ENCODE measurements at regions of chr10 and their contacts with region 1.

Region 1: GRCh38 chr10:110843031-110843430 is 28.7 kb upstream of the PDCD4 start:
- DNase-seq: peak; percentile 83
- CTCF ChIP-seq: no peak

Region 2: GRCh38 chr10:110774069-110775019 is 68.7 kb before region 1 on chr10:
- CTCF ChIA-PET with region 1: interaction called, 3 read pairs
- POLR2A ChIA-PET with region 1: interaction called, 10 read pairs
- DNase-seq: peak; percentile 80
- CTCF ChIP-seq: no peak

Region 3: DNA sequence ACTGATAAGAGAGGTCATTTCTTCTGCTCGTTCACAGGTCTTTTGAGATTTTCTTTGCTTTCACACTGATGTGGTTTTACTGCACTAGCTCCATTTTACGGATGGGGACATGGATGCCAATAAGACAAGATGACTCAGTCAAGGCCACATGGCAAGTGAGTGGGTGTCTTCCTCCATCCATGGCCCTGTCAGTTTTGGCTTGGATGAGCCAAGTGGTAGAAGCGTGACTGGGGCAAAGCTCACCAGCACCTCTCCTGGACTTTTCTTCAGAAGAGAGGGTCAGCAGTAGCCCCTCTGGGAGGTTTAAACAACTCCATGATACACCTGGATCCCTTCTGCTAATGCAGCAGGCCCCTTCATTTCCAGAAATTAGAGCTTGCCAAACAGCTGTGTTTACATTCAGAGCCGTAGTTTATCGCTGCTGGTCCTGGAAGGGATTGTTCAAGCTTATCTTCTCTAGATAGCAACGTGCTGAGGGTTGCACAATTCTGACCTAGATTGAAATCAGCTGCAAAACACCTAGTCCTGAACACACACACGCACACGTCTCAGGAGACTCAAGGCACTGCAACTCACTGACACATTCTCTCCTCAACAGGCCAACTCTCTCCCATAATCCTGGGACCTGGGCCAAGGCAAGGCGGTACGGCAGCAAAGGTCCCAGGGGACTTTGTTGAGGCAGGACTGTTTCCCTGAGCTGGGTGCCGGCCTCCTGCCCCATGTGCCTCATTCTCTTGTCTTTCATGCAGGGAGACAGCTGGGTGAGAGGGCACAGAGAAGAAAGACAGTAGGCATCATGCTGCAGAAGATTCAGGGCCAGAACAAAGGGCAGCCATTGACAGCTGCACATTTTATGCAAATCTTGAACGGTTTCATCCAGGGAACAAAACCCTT is 14.5 kb after region 1 on chr10:
- CTCF ChIA-PET with region 1: interaction called, 58 read pairs
- POLR2A ChIA-PET with region 1: interaction called, 20 read pairs
- DNase-seq: no peak
- CTCF ChIP-seq: no peak

Region 4: DNA sequence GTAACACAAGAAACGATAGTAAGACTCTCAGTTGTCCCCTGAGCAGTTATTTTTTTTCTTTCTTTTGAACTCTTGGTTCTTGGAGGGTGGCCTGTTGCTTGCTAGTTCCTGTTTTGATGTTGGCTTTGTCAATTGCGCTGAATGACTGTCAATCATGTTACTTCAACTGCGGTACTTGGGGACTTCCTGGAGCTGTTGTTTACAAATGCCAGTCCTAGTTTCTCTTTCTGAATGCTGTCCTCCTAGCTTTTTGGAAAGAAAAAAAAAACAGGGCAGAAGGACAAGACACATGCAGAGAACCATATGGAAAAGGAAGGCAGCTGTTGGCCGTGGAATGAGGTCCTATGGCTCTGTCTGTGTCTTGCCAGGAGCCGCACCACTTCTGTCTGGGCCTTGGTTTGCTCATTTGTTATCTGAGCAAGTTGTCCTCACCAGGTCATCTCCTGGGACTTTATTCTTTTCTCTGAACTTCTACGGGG is 21.7 kb after region 1 on chr10:
- CTCF ChIA-PET with region 1: interaction called, 58 read pairs
- POLR2A ChIA-PET with region 1: interaction called, 20 read pairs
- DNase-seq: peak; percentile 51
- CTCF ChIP-seq: no peak

Region 5: DNA sequence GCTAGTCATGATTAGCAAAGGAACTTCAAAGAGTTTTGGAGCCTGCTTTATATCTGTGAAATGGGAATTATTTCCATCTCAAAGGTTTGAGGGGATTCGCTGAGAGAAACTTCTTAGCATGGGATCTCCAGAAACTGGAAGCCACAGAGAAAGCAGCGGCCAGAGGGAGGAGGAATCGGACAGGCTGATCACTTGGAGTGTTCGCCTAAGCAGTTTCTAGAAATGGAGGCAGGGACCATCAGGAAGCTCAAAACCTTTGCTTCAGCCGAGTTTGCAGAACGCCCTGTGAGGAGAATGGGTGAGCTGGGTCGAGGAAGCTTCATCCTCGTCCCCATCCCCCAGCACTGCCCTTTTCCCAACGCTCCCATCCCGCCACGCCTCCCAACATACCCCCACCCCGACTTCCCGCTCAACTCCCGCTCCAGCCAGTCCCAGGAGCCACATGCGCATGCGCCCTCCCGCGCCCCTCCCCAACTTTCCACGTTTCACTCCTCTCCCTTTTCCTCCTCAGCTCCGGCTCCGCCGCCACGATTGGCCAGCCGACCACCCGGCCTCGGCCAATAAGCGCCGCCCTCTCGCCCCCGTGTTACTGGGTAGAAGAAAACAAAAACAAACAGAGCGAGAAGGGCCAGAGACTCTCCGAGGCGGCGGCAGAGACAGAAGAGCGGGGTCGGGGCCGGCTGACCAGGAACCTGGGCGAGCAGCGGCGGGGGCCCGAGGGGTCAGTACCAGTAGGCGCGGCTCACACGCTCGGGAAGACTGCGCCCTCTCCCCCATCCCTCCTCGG is 28.5 kb after region 1 on chr10 and contains the start of gene PDCD4:
- CTCF ChIA-PET with region 1: interaction called, 27 read pairs
- POLR2A ChIA-PET with region 1: interaction called, 21 read pairs
- DNase-seq: peak; percentile 90
- CTCF ChIP-seq: no peak